Activated naive CD4-positive, alpha-beta T cell treated with anti-CD3 and anti-CD28 coated beads for 36 hours (primary cell): ENCODE measurements at regions of chr20 and their contacts with region 1.

Region 1: DNA sequence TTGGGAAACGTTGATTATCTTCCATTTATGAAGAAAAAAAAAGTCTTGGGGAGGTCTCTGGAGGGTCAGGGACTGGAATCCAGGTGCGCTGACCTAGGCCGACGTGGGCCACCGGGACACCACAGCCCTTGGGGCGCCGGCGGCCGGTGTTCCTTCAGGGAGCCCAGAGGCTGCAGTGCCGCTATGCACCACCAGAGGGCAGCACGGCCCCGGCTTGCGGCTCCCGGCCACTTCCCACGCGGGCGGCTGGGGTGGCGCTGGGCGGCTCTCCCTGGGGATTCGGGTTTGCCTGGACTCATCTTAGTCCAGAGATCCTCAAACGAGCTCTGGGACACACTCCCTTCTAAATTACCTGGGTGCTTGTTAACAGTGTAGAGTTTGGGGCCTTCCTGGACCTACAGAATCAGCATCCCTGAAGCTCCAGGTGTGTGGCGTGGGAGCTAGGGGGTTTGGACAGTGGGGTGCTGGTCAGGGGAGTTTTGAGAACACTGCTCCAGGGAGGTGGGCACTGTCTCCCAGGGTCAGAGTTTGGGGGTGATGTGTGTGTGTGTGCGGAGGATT is 23.0 kb upstream of the GTSF1L start:
- DNase-seq: peak; percentile 88
- H3K4me3 Mint-ChIP-seq: no peak overlapping the region
- H3K27ac Mint-ChIP-seq: peak overlapping the region; percentile 54
- H3K4me1 Mint-ChIP-seq: peaks cover 44% of the 10 kb centered on the region
- H3K27me3 Mint-ChIP-seq: no peaks in the 10 kb centered on the region

Region 2: GRCh38 chr20:43736588-43737158 is 13.1 kb before region 1 on chr20:
- CTCF ChIA-PET with region 1: interaction called, 21 read pairs
- intact Hi-C with region 1: loop called (anchors 1 kb)
- DNase-seq: peak; percentile 68
- H3K4me3 Mint-ChIP-seq: no peak overlapping the region
- H3K27ac Mint-ChIP-seq: no peak overlapping the region
- H3K4me1 Mint-ChIP-seq: peaks cover 35% of the 10 kb centered on the region
- H3K27me3 Mint-ChIP-seq: no peaks in the 10 kb centered on the region

Region 3: GRCh38 chr20:43914311-43915210 is 164.7 kb after region 1 on chr20 and contains the start of gene TOX2:
- CTCF ChIA-PET with region 1: interaction called, 4 read pairs
- intact Hi-C with region 1: loop called (anchors 2 kb)
- DNase-seq: peak; percentile 39
- H3K4me3 Mint-ChIP-seq: peak within 1 kb of the TSS; percentile 73
- H3K27ac Mint-ChIP-seq: no peak within 1 kb of the TSS
- H3K4me1 Mint-ChIP-seq: peaks cover 32% of the 10 kb centered on the region
- H3K27me3 Mint-ChIP-seq: peaks cover 43% of the 10 kb centered on the region
- total RNA-seq, gene TOX2: 1.2 to 1.6 TPM

Region 4: GRCh38 chr20:44069203-44070011 is 319.6 kb after region 1 on chr20:
- CTCF ChIA-PET with region 1: interaction called, 11 read pairs
- intact Hi-C with region 1: loop called (anchors 1 kb)
- DNase-seq: peak; percentile 79
- H3K4me3 Mint-ChIP-seq: peak overlapping the region; percentile 72
- H3K27ac Mint-ChIP-seq: peak overlapping the region; percentile 90
- H3K4me1 Mint-ChIP-seq: peaks cover 66% of the 10 kb centered on the region
- H3K27me3 Mint-ChIP-seq: no peaks in the 10 kb centered on the region

Region 5: GRCh38 chr20:44092551-44093248 is 342.9 kb after region 1 on chr20:
- CTCF ChIA-PET with region 1: interaction called, 7 read pairs
- intact Hi-C with region 1: loop called (anchors 1 kb)
- DNase-seq: peak; percentile 64
- H3K4me3 Mint-ChIP-seq: no peak overlapping the region
- H3K27ac Mint-ChIP-seq: no peak overlapping the region
- H3K4me1 Mint-ChIP-seq: no peaks in the 10 kb centered on the region
- H3K27me3 Mint-ChIP-seq: peaks cover 11% of the 10 kb centered on the region

Region 6: GRCh38 chr20:44642203-44643153 is 892.7 kb after region 1 on chr20:
- CTCF ChIA-PET with region 1: no interaction called
- intact Hi-C with region 1: loop called (anchors 10 kb)
- DNase-seq: peak; percentile 52
- H3K4me3 Mint-ChIP-seq: peak overlapping the region; percentile 19
- H3K27ac Mint-ChIP-seq: peak overlapping the region; percentile 57
- H3K4me1 Mint-ChIP-seq: peaks cover 60% of the 10 kb centered on the region
- H3K27me3 Mint-ChIP-seq: no peaks in the 10 kb centered on the region